Panc1 (cell line): ENCODE measurements at regions of chr3 and their contacts with region 1.

Region 1: GRCh38 chr3:84547971-84548970 is 410.5 kb upstream of the CADM2 start:
- DNase-seq: peak; percentile 12
- ATAC-seq: peak; percentile 92
- H3K4me3 ChIP-seq: peak overlapping the region; percentile 37 to 63
- H3K27ac ChIP-seq: peak overlapping the region; percentile 29; the same call in 1 of the 2 replicates
- H3K4me1 ChIP-seq: no peaks in the 10 kb centered on the region
- H3K27me3 ChIP-seq: no peaks in the 10 kb centered on the region
- CTCF ChIP-seq: peak; percentile 67

Region 2: DNA sequence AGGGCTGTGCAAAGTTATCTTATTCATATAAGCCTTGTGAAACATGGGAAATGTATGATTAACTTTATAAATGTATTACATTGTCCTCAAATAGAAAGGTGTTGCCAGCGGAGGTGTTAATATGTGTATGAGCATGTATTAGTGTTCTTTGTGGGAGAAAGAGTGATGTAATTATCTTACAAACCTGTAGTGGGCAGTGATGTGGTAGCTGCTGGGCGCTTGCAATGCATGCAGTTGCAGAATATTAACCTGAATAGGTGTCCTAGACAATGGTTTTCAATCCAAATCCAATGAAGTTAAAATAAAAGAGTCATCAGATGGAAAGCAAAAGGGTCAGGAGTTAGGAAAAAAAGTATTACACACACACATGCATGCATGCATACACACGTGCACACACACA is 470.8 kb before region 1 on chr3:
- CTCF ChIA-PET with region 1: no interaction called
- POLR2A ChIA-PET with region 1: no interaction called
- in situ Hi-C with region 1: no loop called
- intact Hi-C with region 1: no loop called
- DNase-seq: peak; percentile 2
- ATAC-seq: no peak
- H3K4me3 ChIP-seq: no peak overlapping the region
- H3K27ac ChIP-seq: no peak overlapping the region
- H3K4me1 ChIP-seq: no peaks in the 10 kb centered on the region
- H3K27me3 ChIP-seq: no peaks in the 10 kb centered on the region
- CTCF ChIP-seq: peak; percentile 39; the same call in 1 of the 2 replicates

Region 3: GRCh38 chr3:84621823-84622222 is 73.6 kb after region 1 on chr3:
- CTCF ChIA-PET with region 1: no interaction called
- POLR2A ChIA-PET with region 1: no interaction called
- in situ Hi-C with region 1: no loop called
- intact Hi-C with region 1: no loop called
- DNase-seq: no peak
- ATAC-seq: no peak
- H3K4me3 ChIP-seq: no peak overlapping the region
- H3K27ac ChIP-seq: no peak overlapping the region
- H3K4me1 ChIP-seq: no peaks in the 10 kb centered on the region
- H3K27me3 ChIP-seq: no peaks in the 10 kb centered on the region
- CTCF ChIP-seq: no peak

Region 4: GRCh38 chr3:84789961-84790360 is 241.7 kb after region 1 on chr3:
- CTCF ChIA-PET with region 1: no interaction called
- POLR2A ChIA-PET with region 1: no interaction called
- in situ Hi-C with region 1: no loop called
- intact Hi-C with region 1: no loop called
- DNase-seq: no peak
- ATAC-seq: no peak
- H3K4me3 ChIP-seq: no peak overlapping the region
- H3K27ac ChIP-seq: no peak overlapping the region
- H3K4me1 ChIP-seq: no peaks in the 10 kb centered on the region
- H3K27me3 ChIP-seq: no peaks in the 10 kb centered on the region
- CTCF ChIP-seq: no peak

Region 5: DNA sequence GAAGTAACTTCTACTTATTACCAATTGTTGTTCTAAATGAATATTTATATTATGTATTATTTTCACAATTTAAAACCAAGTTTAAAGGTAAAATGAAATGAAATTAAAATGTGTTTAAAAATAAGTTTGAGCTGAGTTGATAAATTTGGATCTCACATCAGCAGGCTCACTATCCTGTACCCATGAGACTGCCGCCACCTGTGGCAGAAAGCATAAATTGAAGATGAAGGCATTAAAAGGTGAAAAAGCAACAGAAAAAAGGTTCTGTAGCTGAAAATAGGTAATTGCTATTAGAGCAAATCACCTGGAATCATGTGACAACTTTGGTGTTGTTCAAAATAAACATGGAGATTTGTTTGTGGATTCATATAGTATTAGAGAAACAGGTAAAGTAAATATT is 277.5 kb after region 1 on chr3:
- CTCF ChIA-PET with region 1: no interaction called
- POLR2A ChIA-PET with region 1: no interaction called
- in situ Hi-C with region 1: no loop called
- intact Hi-C with region 1: loop called (anchors 10 kb)
- DNase-seq: no peak
- ATAC-seq: no peak
- H3K4me3 ChIP-seq: no peak overlapping the region
- H3K27ac ChIP-seq: no peak overlapping the region
- H3K4me1 ChIP-seq: no peaks in the 10 kb centered on the region
- H3K27me3 ChIP-seq: no peaks in the 10 kb centered on the region
- CTCF ChIP-seq: no peak; the same call in 1 of the 2 replicates